Right ventricle myocardium inferior (tissue), 1 donor: ENCODE measurements at regions of chr10 and their contacts with region 1.

Region 1: DNA sequence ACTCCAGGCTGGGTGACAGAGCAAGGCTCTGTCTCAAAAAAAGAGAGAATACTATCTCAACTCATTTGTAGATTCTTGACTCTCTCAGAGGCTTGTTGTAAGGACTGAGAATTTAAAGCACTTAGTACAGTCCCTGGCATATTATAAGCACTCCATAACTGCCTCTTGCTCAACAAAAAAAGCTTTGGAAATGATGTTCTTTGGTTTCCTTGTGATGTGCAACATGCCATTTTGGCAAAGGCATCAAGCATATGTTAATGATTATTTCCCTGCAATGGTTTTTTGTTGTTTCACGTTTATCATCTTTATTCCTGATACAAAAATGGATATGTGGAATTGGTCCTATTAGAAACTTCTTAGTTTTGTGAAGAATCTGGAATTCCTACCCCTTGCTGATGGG is 15.7 kb downstream of the NOLC1 start:
- DNase-seq: no peak
- ATAC-seq: no peak

Region 2: DNA sequence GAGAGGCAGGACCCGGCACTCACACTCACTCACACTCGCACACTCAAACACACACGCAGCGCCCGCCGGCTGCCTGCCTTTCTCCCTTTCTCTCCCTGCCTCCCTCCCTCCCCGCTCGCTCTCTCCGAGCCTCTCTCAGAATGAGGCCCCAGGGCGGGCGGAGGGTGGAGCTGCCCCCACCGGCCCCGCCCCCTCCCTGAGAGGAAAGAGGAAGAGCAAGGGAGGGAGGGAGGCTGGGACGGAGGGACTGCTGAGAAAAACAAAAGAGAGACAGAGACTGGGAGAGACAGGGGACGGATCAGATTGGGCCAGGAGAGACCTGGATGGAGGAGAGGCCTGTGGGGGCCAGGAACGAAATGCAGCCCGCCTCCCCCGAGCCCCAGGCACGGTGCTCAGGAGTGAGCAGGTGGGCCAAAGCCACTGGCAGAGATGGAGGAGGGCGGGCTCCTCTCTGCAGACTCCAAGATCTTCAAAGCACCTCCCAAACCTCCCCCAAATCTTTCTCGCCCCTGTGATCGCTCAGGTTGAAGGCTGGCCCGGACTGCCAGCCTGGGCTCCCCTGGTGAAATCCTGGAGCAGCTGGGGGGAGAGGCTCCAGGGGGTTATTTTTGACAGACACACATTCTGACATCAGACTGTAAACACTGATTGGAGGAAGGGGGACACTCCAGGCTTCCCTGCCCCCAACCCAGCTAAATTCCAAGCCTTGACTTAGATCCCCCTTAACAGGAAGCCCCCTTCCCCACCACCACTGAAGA is 52.8 kb before region 1 on chr10:
- intact Hi-C with region 1: no loop called
- DNase-seq: peak; percentile 97
- ATAC-seq: peak; percentile 83

Region 3: GRCh38 chr10:102352066-102352715 is 184.3 kb after region 1 on chr10:
- intact Hi-C with region 1: loop called (anchors 2 kb)
- DNase-seq: no peak
- ATAC-seq: no peak